ENCODE measurements at regions of chr12 and their contacts with region 1.

Region 1: GRCh38 chr12:75505706-75506312 is 5.6 kb downstream of the KRR1 start:
- DNase-seq: peak; percentile 53
- ATAC-seq: peak; percentile 57
- H3K4me3 ChIP-seq: no peak overlapping the region
- H3K4me3 Mint-ChIP-seq: no peak overlapping the region
- H3K27ac ChIP-seq: peak overlapping the region; percentile 4 to 37
- H3K27ac Mint-ChIP-seq: no peak overlapping the region
- H3K4me1 ChIP-seq: peaks cover 5 to 12% of the 10 kb centered on the region in 2 donors
- H3K4me1 Mint-ChIP-seq: peaks cover 18% of the 10 kb centered on the region
- H3K27me3 ChIP-seq: no peaks in the 10 kb centered on the region
- H3K27me3 Mint-ChIP-seq: no peaks in the 10 kb centered on the region
- CTCF ChIP-seq: peak; percentile 82

Region 2: DNA sequence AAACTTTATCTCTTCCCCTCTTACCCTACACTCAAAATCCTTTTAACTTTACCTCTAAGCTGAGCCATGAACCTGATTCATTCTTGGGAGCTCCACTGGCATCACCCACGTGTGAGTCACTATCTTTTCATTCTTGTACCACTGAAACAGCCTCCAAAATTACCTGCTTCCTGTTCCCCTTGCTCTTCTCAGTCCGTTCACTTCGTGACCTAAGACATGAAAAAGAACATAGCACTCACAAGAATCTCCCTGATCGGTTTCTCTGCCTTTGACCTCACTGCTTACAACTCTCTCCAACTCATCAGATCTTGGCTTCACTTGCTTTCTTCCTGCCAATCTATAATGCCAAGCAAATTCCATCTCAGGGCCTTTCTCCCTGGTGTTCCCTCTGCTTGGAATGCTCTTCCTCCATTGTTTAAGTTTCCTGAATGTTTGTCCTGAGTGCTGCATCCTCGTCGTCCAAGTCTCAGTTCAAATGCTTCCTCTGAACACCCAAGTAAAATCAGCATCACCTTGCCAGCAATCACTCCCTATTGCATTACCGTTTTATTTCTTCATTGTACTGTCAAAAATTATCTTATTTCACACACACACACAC is 16.1 kb before region 1 on chr12:
- CTCF ChIA-PET with region 1: interaction called, 124 read pairs
- POLR2A ChIA-PET with region 1: no interaction called
- intact Hi-C with region 1: no loop called
- DNase-seq: no peak
- ATAC-seq: peak; percentile 21
- H3K4me3 ChIP-seq: no peak overlapping the region
- H3K4me3 Mint-ChIP-seq: no peak overlapping the region
- H3K27ac ChIP-seq: peak overlapping the region in 1 of 2 donors; percentile 28
- H3K27ac Mint-ChIP-seq: peak overlapping the region; percentile 5
- H3K4me1 ChIP-seq: peaks cover 9 to 16% of the 10 kb centered on the region in 2 donors
- H3K4me1 Mint-ChIP-seq: peaks cover 50% of the 10 kb centered on the region
- H3K27me3 ChIP-seq: no peaks in the 10 kb centered on the region
- H3K27me3 Mint-ChIP-seq: no peaks in the 10 kb centered on the region
- CTCF ChIP-seq: no peak